Activated B cell treated with CpG ODN at 0.5 μM for 24 hours (primary cell): ENCODE measurements at regions of chr20 and their contacts with region 1.

Region 1: GRCh38 chr20:45322952-45323383 is 14.9 kb upstream of the MATN4 start:
- DNase-seq: no peak
- ATAC-seq: peak; percentile 19
- H3K4me3 Mint-ChIP-seq: no peak overlapping the region
- H3K27ac Mint-ChIP-seq: no peak overlapping the region
- H3K4me1 Mint-ChIP-seq: peaks cover 37% of the 10 kb centered on the region
- H3K27me3 Mint-ChIP-seq: no peaks in the 10 kb centered on the region
- CTCF ChIP-seq: no peak

Region 2: GRCh38 chr20:45253260-45253659 is 69.7 kb before region 1 on chr20:
- CTCF ChIA-PET with region 1: no interaction called
- POLR2A ChIA-PET with region 1: no interaction called
- intact Hi-C with region 1: no loop called
- DNase-seq: no peak
- ATAC-seq: no peak
- H3K4me3 Mint-ChIP-seq: no peak overlapping the region
- H3K27ac Mint-ChIP-seq: no peak overlapping the region
- H3K4me1 Mint-ChIP-seq: no peaks in the 10 kb centered on the region
- H3K27me3 Mint-ChIP-seq: peaks cover 52% of the 10 kb centered on the region
- CTCF ChIP-seq: no peak

Region 3: GRCh38 chr20:45487231-45487635 is 164.3 kb after region 1 on chr20:
- CTCF ChIA-PET with region 1: no interaction called
- POLR2A ChIA-PET with region 1: no interaction called
- intact Hi-C with region 1: loop called (anchors 1 kb)
- DNase-seq: no peak
- ATAC-seq: no peak
- H3K4me3 Mint-ChIP-seq: no peak overlapping the region
- H3K27ac Mint-ChIP-seq: no peak overlapping the region
- H3K4me1 Mint-ChIP-seq: no peaks in the 10 kb centered on the region
- H3K27me3 Mint-ChIP-seq: peaks cover 26% of the 10 kb centered on the region
- CTCF ChIP-seq: no peak